OCI-LY7 (cell line): ENCODE measurements at regions of chr11 and their contacts with region 1.

Region 1: GRCh38 chr11:67439321-67439883 is 1.9 kb upstream of the PTPRCAP start:
- DNase-seq: no peak
- H3K4me3 ChIP-seq: peak overlapping the region; percentile 81
- H3K27ac ChIP-seq: peak overlapping the region; percentile 94
- H3K4me1 ChIP-seq: peaks cover 80% of the 10 kb centered on the region
- CTCF ChIP-seq: peak; percentile 72

Region 2: DNA sequence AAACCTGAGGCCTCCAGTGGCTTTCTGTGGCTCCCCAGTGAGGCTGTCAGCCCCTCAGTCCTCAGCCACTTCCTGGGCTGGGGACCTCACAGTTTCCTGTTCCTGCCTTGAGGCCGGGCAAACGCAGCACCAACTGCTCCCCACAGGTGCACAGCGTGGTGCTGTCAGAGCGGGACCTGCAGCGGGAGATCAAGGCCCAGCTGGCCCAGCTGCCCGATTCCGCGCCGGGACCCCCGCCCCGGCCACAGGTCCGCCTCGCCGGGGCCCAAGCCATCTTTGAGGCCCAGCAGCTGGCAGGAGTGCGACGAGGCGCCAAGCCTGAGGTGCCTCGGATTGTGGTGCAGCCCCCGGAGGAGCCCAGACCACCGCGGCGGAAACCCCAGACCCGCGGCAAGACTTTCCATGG is 30.1 kb before region 1 on chr11:
- CTCF ChIA-PET with region 1: interaction called, 6 read pairs
- POLR2A ChIA-PET with region 1: interaction called, 38 read pairs
- intact Hi-C with region 1: loop called (anchors 2 kb)
- DNase-seq: peak; percentile 95
- H3K4me3 ChIP-seq: peak overlapping the region; percentile 79
- H3K27ac ChIP-seq: peak overlapping the region; percentile 97
- H3K4me1 ChIP-seq: peaks cover 88% of the 10 kb centered on the region
- CTCF ChIP-seq: no peak

Region 3: GRCh38 chr11:67457453-67457852 is 18.1 kb after region 1 on chr11:
- CTCF ChIA-PET with region 1: interaction called, 3 read pairs
- POLR2A ChIA-PET with region 1: interaction called, 38 read pairs
- intact Hi-C with region 1: no loop called
- DNase-seq: no peak
- H3K4me3 ChIP-seq: no peak overlapping the region
- H3K27ac ChIP-seq: no peak overlapping the region
- H3K4me1 ChIP-seq: peaks cover 43% of the 10 kb centered on the region
- CTCF ChIP-seq: no peak